PC-9 (cell line): ENCODE measurements at regions of chr16 and their contacts with region 1.

Region 1: GRCh38 chr16:11586856-11587642 is at the start of gene LITAF:
- DNase-seq: peak in 1 of 2 experiments; percentile 72
- H3K4me3 ChIP-seq: peak within 1 kb of the TSS; percentile 89
- H3K27ac ChIP-seq: peak within 1 kb of the TSS; percentile 60
- H3K4me1 ChIP-seq: peaks cover 40% of the 10 kb centered on the region
- H3K27me3 ChIP-seq: no peaks in the 10 kb centered on the region
- CTCF ChIP-seq: no peak
- total RNA-seq, gene LITAF: 232 and 244 TPM in 2 replicates

Region 2: GRCh38 chr16:11497851-11498289 is 89.2 kb before region 1 on chr16:
- CTCF ChIA-PET with region 1: no interaction called
- POLR2A ChIA-PET with region 1: no interaction called
- intact Hi-C with region 1: loop called (anchors 5 kb)
- DNase-seq: peak in 1 of 2 experiments; percentile 65
- H3K4me3 ChIP-seq: no peak overlapping the region
- H3K27ac ChIP-seq: peak overlapping the region; percentile 50
- H3K4me1 ChIP-seq: peaks cover 20% of the 10 kb centered on the region
- H3K27me3 ChIP-seq: no peaks in the 10 kb centered on the region
- CTCF ChIP-seq: no peak

Region 3: DNA sequence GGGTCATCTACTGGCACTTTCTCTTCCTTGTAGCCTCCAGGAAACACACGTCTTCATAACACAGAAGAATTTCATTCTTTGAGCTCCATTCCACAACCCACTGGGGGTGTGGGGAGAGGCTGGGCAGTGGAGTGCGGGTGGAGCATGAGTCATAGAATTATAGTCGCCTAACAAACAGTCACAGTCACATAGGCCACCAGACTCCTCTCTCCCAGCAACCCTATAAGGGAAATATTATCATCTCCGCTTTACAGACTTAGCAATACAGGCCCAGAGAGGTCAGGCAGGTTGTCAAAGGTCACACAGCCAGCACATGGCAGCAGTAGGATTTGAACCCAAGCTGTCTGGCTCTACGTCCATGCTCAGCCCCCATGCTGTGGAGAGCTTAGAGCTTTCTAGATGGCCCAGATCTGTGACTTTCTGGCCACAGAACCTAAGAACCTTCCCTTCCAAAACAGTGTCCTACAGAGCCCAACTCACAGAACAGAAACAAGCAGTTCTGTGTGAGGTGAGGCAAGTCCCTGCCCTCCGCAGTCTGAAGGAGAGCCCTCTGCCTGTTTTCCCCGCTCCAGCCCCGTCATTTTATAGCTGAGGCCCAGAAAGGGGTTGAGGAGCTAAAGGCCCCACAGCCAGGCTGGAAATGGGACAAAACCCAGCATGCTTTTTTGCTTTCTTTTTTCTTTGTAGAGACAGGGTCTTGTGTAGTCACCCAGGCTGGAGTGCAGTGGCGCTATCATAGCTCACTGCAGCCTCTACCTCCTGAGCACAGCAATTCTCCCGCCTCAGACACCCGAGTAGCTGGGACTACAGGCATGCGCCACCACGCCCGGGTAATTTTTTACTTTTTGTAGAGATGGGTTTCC is 10.4 kb after region 1 on chr16:
- CTCF ChIA-PET with region 1: interaction called, 6 read pairs
- POLR2A ChIA-PET with region 1: interaction called, 42 read pairs
- intact Hi-C with region 1: no loop called
- DNase-seq: peak; percentile 74 to 77
- H3K4me3 ChIP-seq: no peak overlapping the region
- H3K27ac ChIP-seq: peak overlapping the region; percentile 84
- H3K4me1 ChIP-seq: peaks cover 41% of the 10 kb centered on the region
- H3K27me3 ChIP-seq: no peaks in the 10 kb centered on the region
- CTCF ChIP-seq: no peak

Region 4: GRCh38 chr16:11613381-11614303 is 26.6 kb after region 1 on chr16:
- CTCF ChIA-PET with region 1: no interaction called
- POLR2A ChIA-PET with region 1: interaction called, 5 read pairs
- intact Hi-C with region 1: loop called (anchors 1 kb)
- DNase-seq: peak; percentile 54 to 70
- H3K4me3 ChIP-seq: no peak overlapping the region
- H3K27ac ChIP-seq: peak overlapping the region; percentile 94
- H3K4me1 ChIP-seq: peaks cover 84% of the 10 kb centered on the region
- H3K27me3 ChIP-seq: no peaks in the 10 kb centered on the region
- CTCF ChIP-seq: no peak

Region 5: DNA sequence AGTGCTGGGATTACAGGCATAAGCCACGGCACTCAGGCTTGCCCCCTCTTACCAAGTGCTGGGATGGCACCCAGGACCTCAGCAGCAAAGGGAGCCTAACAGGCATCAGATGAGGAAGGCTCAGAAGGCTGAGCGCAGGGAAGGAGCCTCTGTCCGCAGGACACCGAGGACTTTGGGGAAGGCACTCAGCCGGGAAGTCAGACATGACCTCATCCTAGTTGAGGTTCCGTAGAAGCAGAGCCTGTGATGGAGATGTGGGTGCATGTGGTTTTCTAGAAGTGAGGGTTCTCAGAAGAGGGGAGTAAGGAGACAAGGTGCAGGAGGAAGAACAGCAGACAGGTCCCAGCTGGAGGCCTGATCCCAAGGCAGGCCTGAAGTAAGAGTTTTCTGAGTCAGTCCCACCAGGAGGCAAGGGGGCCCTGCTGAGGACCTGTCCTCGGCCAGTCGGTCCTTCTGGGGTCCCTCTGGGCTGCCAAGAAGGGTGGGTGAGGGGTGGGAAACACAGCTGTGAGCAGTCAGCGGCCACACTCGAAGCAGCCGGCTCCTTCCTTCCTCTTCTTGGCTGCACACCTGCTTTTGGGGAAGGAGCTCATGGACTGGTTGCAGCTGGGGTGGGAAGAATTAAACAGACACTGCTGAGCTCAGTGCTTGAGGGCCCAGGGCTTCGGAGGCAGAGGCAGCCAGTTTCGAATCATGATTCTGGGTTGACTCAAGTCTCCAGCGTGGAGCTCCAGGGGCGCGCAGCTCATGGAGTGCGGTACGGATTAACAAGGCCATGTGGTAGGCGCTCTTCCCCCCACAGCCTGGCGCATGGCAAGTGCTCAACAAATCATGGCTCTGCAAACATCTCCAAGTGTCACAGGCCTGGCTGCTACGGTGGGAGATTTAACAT is 42.3 kb after region 1 on chr16:
- CTCF ChIA-PET with region 1: interaction called, 11 read pairs
- POLR2A ChIA-PET with region 1: interaction called, 17 read pairs
- intact Hi-C with region 1: no loop called
- DNase-seq: no peak
- H3K4me3 ChIP-seq: no peak overlapping the region
- H3K27ac ChIP-seq: peak overlapping the region; percentile 98
- H3K4me1 ChIP-seq: peaks cover 49% of the 10 kb centered on the region
- H3K27me3 ChIP-seq: no peaks in the 10 kb centered on the region
- CTCF ChIP-seq: no peak

Region 6: GRCh38 chr16:11639925-11640899 is 53.2 kb after region 1 on chr16:
- CTCF ChIA-PET with region 1: interaction called, 8 read pairs
- POLR2A ChIA-PET with region 1: interaction called, 17 read pairs
- intact Hi-C with region 1: loop called (anchors 1 kb)
- DNase-seq: peak; percentile 92 to 97
- H3K4me3 ChIP-seq: peak overlapping the region; percentile 36; the same call in 1 of the 2 replicates
- H3K27ac ChIP-seq: peak overlapping the region; percentile 99
- H3K4me1 ChIP-seq: peaks cover 49% of the 10 kb centered on the region
- H3K27me3 ChIP-seq: no peaks in the 10 kb centered on the region
- CTCF ChIP-seq: no peak

Region 7: GRCh38 chr16:11675561-11676511 is 88.8 kb after region 1 on chr16:
- CTCF ChIA-PET with region 1: no interaction called
- POLR2A ChIA-PET with region 1: no interaction called
- intact Hi-C with region 1: loop called (anchors 1 kb)
- DNase-seq: peak; percentile 60 to 90
- H3K4me3 ChIP-seq: no peak overlapping the region
- H3K27ac ChIP-seq: no peak overlapping the region
- H3K4me1 ChIP-seq: no peaks in the 10 kb centered on the region
- H3K27me3 ChIP-seq: no peaks in the 10 kb centered on the region
- CTCF ChIP-seq: no peak; the same call in 1 of the 2 replicates